ENCODE measurements at regions of chr19 and their contacts with region 1.

Region 1: DNA sequence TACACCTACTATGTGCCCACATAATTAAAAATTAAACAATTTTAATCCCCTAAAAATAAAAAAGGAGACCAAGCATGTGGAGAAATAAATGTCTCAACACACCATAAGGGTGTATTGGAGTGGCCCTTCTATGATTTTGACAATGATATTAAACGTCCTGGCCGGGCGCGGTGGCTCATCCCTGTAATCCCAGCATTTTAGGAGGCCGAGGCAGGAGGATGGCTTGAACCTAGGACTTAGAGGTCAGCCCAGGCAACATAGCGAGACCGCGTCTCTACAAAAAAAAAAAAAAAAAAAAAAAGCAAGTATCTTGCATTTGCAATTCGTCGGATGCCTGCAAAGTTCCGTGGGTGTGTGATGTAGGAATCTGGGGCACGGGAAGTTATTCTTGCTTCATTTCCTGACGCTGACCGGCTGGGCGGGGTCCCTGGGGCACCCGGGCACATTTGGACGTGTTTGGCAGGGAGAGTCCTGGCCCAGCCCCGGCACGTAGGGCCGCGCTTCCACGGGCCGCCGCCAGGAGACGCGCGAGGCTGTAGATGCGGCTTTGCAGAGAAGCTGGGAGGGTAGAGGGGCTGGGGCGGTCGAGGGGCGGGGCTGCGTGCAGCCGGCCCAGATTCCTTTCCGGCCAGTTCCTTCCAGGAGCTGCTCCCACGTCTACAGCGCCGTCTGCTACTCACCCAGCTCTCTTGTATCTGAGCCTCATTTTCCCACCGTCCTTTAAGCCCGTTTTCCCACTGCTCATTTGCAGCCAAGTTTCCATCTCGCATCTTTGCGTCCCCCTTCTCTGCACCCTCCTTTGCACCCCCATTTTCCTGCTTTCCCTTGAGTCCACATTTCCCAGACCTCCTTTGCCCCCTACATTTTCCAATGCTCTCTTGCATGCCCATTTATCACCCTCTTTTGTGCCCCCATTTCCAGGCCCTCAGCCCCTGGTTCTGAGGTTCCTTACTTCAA is 2.2 kb upstream of the TSPAN16 start:
- DNase-seq: peak; percentile 79
- H3K4me3 ChIP-seq: peak overlapping the region; percentile 20
- H3K27ac ChIP-seq: no peak overlapping the region
- H3K4me1 ChIP-seq: peaks cover 21% of the 10 kb centered on the region
- CTCF ChIP-seq: peak; percentile 94

Region 2: GRCh38 chr19:11346092-11346940 is 52.6 kb after region 1 on chr19 and contains the starts of genes CCDC159 and TMEM205:
- CTCF ChIA-PET with region 1: no interaction called
- POLR2A ChIA-PET with region 1: no interaction called
- intact Hi-C with region 1: loop called (anchors 2 kb)
- DNase-seq: peak; percentile 100
- H3K4me3 ChIP-seq: peak within 1 kb of the TSS; percentile 88
- H3K27ac ChIP-seq: peak within 1 kb of the TSS; percentile 55
- H3K4me1 ChIP-seq: peaks cover 26% of the 10 kb centered on the region
- CTCF ChIP-seq: peak; percentile 61
- total RNA-seq, gene CCDC159: 13.3 and 14.1 TPM in 2 replicates
- total RNA-seq, gene TMEM205: 58.4 and 58.9 TPM in 2 replicates

Region 3: GRCh38 chr19:11374433-11375142 is 80.9 kb after region 1 on chr19 and contains the start of gene SWSAP1:
- CTCF ChIA-PET with region 1: no interaction called
- POLR2A ChIA-PET with region 1: interaction called, 10 read pairs
- intact Hi-C with region 1: loop called (anchors 2 kb)
- DNase-seq: peak; percentile 99
- H3K4me3 ChIP-seq: peak within 1 kb of the TSS; percentile 87
- H3K27ac ChIP-seq: peak within 1 kb of the TSS; percentile 80
- H3K4me1 ChIP-seq: peaks cover 41% of the 10 kb centered on the region
- CTCF ChIP-seq: no peak
- total RNA-seq, gene SWSAP1: 5.6 and 6.6 TPM in 2 replicates

Region 4: GRCh38 chr19:11387162-11388034 is 93.7 kb after region 1 on chr19:
- CTCF ChIA-PET with region 1: no interaction called
- POLR2A ChIA-PET with region 1: no interaction called
- intact Hi-C with region 1: no loop called
- DNase-seq: peak; percentile 65
- H3K4me3 ChIP-seq: peak overlapping the region; percentile 23
- H3K27ac ChIP-seq: peak overlapping the region; percentile 56
- H3K4me1 ChIP-seq: peaks cover 34% of the 10 kb centered on the region
- CTCF ChIP-seq: no peak

Region 5: GRCh38 chr19:11435058-11435832 is 141.5 kb after region 1 on chr19 and contains the starts of genes ODAD3 and PRKCSH:
- CTCF ChIA-PET with region 1: no interaction called
- POLR2A ChIA-PET with region 1: no interaction called
- intact Hi-C with region 1: loop called (anchors 5 kb)
- DNase-seq: peak; percentile 99
- H3K4me3 ChIP-seq: peak within 1 kb of the TSS; percentile 92
- H3K27ac ChIP-seq: peak within 1 kb of the TSS; percentile 33
- H3K4me1 ChIP-seq: peaks cover 24% of the 10 kb centered on the region
- CTCF ChIP-seq: peak; percentile 82
- total RNA-seq, gene ODAD3: 0.28 and 0.57 TPM in 2 replicates
- total RNA-seq, gene PRKCSH: 61.8 and 95.6 TPM in 2 replicates

Region 6: GRCh38 chr19:11446652-11447301 is 153.1 kb after region 1 on chr19:
- CTCF ChIA-PET with region 1: no interaction called
- POLR2A ChIA-PET with region 1: no interaction called
- intact Hi-C with region 1: loop called (anchors 1 kb)
- DNase-seq: peak; percentile 59
- H3K4me3 ChIP-seq: no peak overlapping the region
- H3K27ac ChIP-seq: no peak overlapping the region
- H3K4me1 ChIP-seq: peaks cover 5% of the 10 kb centered on the region
- CTCF ChIP-seq: peak; percentile 84

Region 7: DNA sequence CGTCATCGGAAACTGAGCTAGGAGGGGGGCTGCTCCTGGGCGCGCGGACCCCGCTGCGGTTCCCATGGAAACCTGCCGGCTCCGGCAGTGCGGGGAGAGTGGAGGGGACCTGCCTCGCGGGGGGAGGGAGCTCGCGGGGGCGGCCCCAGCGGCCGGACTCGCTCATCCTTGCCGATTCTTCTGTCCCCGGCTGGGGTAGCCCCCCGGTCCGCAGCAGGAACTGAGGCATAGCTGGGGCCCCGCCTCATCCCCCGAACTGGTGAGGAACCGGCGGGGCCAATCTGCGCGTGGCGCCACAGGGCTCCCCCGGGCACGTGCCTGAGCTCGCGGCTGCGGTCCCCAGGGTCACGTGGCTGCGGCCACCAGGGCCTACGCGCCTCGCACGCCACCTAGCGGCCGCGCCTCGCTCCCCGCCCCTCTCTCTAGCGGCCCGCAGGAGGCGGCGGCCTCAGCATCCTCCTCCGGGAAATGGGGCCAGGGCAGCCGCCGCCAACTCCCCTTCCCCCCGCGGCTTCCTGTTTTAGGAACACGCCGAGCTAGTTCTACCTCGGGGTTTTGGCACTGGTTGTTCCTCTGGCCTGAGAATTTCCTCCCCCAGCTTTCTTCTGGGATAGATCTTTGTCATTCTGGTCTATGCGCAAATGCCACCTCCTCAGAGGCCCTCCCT is 188.8 kb after region 1 on chr19:
- CTCF ChIA-PET with region 1: no interaction called
- POLR2A ChIA-PET with region 1: no interaction called
- intact Hi-C with region 1: loop called (anchors 2 kb)
- DNase-seq: peak; percentile 95
- H3K4me3 ChIP-seq: peak overlapping the region; percentile 65
- H3K27ac ChIP-seq: peak overlapping the region; percentile 65
- H3K4me1 ChIP-seq: peaks cover 23% of the 10 kb centered on the region
- CTCF ChIP-seq: peak; percentile 89